ENCODE measurements at regions of chr3 and their contacts with region 1.

Region 1: GRCh38 chr3:140953028-140953960 is 11.7 kb downstream of the SLC25A36 start:
- DNase-seq: no peak
- ATAC-seq: no peak
- H3K4me3 ChIP-seq: no peak overlapping the region
- H3K4me3 Mint-ChIP-seq: no peak overlapping the region
- H3K27ac ChIP-seq: no peak overlapping the region
- H3K27ac Mint-ChIP-seq: no peak overlapping the region
- H3K4me1 ChIP-seq: peaks cover 0 to 2% of the 10 kb centered on the region in 2 experiments
- H3K4me1 Mint-ChIP-seq: peaks cover 61 to 74% (median 63%) of the 10 kb centered on the region in 3 donors
- H3K27me3 ChIP-seq: no peaks in the 10 kb centered on the region
- H3K27me3 Mint-ChIP-seq: no peaks in the 10 kb centered on the region

Region 2: DNA sequence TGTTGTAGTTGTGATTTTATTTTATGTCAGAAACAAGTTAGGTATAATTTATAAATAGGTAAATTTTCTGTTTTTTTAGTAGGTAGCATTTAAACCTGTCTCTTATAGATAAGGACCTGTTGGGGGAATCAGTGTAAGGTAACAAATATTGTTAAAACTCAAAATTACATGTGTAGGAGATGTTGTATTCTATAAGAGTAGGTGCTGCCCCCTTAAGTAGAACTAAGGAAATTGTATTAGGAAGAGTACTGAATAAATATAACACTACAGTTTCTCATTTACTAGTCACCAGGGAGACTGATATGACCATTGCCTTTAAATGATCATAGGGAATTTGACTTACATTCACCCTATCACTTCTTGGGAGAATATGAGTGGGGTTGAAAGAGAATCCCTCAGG is 19.5 kb after region 1 on chr3:
- CTCF ChIA-PET with region 1: interaction called in 1 of 2 experiments, 4 read pairs
- POLR2A ChIA-PET with region 1: interaction called in 1 of 2 experiments, 15 read pairs
- DNase-seq: peak in 1 of 35 experiments; percentile 20
- ATAC-seq: peak in 1 of 4 experiments; percentile 48
- H3K4me3 ChIP-seq: no peak overlapping the region
- H3K4me3 Mint-ChIP-seq: no peak overlapping the region
- H3K27ac ChIP-seq: no peak overlapping the region
- H3K27ac Mint-ChIP-seq: no peak overlapping the region
- H3K4me1 ChIP-seq: no peaks in the 10 kb centered on the region
- H3K4me1 Mint-ChIP-seq: peaks cover 6 to 8% (median 7%) of the 10 kb centered on the region in 3 donors
- H3K27me3 ChIP-seq: no peaks in the 10 kb centered on the region
- H3K27me3 Mint-ChIP-seq: no peaks in the 10 kb centered on the region

Region 3: DNA sequence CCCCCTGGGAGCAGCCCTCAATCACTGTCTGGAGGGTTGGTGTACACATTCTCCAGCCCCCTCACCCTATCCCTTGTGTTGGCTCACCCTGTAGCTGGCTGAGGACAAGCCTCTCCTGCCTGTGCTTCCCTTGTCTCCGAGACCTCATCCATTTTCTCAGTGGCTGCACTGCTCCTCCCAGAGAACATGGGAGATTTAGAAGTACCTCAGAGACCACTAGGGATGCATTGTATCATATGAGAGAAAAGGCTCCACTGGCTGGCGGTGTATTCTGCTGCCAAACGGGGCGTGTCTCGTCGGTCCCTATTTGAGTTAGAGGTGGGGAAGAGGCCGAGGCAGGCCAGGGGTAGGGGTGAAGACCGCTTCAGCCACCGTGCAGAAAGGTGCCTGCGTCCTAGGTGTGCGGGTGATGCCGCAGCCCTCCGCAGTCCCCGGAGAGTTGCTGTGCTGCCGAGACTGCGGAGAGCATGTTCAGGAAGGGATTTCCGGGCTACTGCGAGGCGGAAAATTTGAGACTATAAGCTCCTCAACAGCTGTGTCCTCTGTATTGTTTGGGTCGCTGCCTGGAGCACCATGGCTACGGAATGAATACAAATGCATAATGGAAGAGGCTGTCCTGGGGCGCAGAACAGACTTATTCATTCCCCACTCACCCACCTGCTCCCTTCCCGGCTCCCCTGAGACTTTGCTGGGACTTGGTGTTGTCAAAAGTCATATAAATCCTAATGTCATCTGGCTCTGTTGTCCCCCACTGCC is 141.7 kb after region 1 on chr3:
- CTCF ChIA-PET with region 1: no interaction called
- POLR2A ChIA-PET with region 1: no interaction called
- DNase-seq: no peak
- ATAC-seq: no peak
- H3K4me3 ChIP-seq: no peak overlapping the region
- H3K4me3 Mint-ChIP-seq: no peak overlapping the region
- H3K27ac ChIP-seq: no peak overlapping the region
- H3K27ac Mint-ChIP-seq: no peak overlapping the region
- H3K4me1 ChIP-seq: no peaks in the 10 kb centered on the region
- H3K4me1 Mint-ChIP-seq: no peaks in the 10 kb centered on the region
- H3K27me3 ChIP-seq: no peaks in the 10 kb centered on the region
- H3K27me3 Mint-ChIP-seq: peaks cover 0 to 1% of the 10 kb centered on the region in 2 donors